ENCODE measurements at regions of chr6 and their contacts with region 1.

Region 1: GRCh38 chr6:26520853-26521599 is 17.1 kb upstream of the HMGN4 start:
- DNase-seq: peak; percentile 80
- ATAC-seq: peak; percentile 78
- H3K4me3 ChIP-seq: peak overlapping the region; percentile 60
- H3K27ac ChIP-seq: peak overlapping the region; percentile 91
- H3K4me1 ChIP-seq: peaks cover 5% of the 10 kb centered on the region; the same call in 1 of the 2 replicates
- H3K27me3 ChIP-seq: no peaks in the 10 kb centered on the region
- CTCF ChIP-seq: no peak
- POLR2A ChIP-seq: peak; percentile 73
- RAD21 ChIP-seq: no peak

Region 2: DNA sequence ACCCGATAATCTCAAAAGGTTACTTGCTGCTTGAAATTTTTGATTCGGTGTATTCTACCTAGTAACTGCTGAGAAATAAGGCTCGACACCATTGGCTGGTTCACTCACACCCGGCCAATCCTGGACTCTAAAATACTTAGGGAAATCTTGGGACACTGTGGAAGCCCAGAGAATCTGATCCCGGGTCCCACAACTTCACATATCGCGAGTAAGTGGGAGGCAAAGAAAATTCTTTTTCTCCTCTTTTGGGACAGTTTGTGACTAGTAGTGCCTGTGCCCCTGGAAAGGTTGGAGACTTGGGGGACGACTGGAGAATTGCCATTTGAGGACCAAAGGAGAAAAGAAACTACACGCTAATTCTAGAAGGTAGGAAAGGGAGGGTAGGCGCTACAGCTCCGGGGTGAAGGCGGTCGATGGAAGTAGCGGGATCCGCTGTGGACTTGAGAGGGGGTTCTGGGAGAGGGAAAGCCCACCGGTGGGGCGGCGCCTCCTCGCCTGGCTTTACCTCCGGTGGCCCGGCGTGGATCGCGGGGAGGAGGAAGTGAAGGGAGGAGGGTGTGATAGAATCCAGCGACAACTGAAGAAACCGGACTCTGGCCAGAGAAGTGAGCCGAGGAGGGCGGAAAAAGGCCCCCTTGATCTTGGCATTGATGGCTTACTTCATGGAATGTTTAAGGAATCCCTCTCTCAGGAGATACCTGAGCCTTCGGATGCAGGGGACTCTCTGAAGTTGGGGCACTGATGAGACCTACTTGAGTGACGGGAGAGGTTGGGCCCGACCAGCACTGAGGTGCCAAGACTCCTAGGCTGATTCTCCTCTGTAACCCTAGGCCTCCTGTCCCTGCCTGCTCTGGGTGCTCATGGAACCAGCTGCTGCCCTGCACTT is 99.5 kb before region 1 on chr6:
- CTCF ChIA-PET with region 1: no interaction called
- POLR2A ChIA-PET with region 1: no interaction called
- dilution Hi-C with region 1: no loop called
- in situ Hi-C with region 1: no loop called
- intact Hi-C with region 1: loop called (anchors 5 kb)
- DNase-seq: peak; percentile 92
- ATAC-seq: peak; percentile 99
- H3K4me3 ChIP-seq: peak overlapping the region; percentile 81
- H3K27ac ChIP-seq: peak overlapping the region; percentile 95
- H3K4me1 ChIP-seq: peaks cover 5% of the 10 kb centered on the region
- H3K27me3 ChIP-seq: no peaks in the 10 kb centered on the region
- CTCF ChIP-seq: no peak
- POLR2A ChIP-seq: no peak
- RAD21 ChIP-seq: no peak

Region 3: DNA sequence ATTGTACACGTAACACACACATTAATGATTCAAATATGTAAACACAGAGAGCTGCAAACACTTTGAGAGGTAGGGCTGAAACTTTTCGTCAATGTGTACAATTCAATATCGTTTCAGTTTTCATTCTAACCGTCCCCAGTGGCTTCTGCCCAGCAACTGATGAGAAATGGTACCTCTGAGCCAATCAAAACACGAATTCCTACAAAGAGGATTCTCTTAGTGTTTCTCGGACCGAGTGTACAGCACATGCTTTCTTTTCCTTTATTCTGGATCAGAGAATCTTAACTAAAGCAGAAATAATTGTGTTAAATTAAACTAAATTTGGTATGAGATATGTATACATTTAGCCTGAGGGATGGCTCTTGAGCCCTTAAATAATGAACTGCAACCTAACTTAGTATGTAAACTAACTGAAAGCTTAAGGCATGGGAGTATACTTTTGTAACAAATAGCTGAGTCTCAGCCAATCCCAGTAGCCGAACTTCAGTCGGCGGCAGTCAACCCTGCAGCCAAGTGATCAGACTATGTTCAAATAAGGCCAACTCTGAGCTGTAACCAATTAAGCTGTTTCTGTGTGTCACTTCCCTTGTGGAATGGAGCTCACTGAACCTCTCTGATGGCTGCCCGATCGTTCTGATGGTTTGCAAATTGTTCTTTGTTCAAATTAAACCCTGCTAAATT is 47.1 kb before region 1 on chr6:
- CTCF ChIA-PET with region 1: no interaction called
- POLR2A ChIA-PET with region 1: no interaction called
- dilution Hi-C with region 1: no loop called
- in situ Hi-C with region 1: no loop called
- intact Hi-C with region 1: loop called (anchors 5 kb)
- DNase-seq: peak; percentile 97
- ATAC-seq: peak; percentile 90
- H3K4me3 ChIP-seq: peak overlapping the region; percentile 53
- H3K27ac ChIP-seq: peak overlapping the region; percentile 98
- H3K4me1 ChIP-seq: peaks cover 24% of the 10 kb centered on the region
- H3K27me3 ChIP-seq: no peaks in the 10 kb centered on the region
- CTCF ChIP-seq: no peak
- POLR2A ChIP-seq: peak; percentile 79
- RAD21 ChIP-seq: no peak

Region 4: GRCh38 chr6:26553635-26554446 is 32.8 kb after region 1 on chr6:
- CTCF ChIA-PET with region 1: no interaction called
- POLR2A ChIA-PET with region 1: no interaction called
- dilution Hi-C with region 1: no loop called
- in situ Hi-C with region 1: no loop called
- intact Hi-C with region 1: loop called (anchors 5 kb)
- DNase-seq: peak; percentile 92
- ATAC-seq: peak; percentile 50
- H3K4me3 ChIP-seq: peak overlapping the region; percentile 58
- H3K27ac ChIP-seq: no peak overlapping the region
- H3K4me1 ChIP-seq: no peaks in the 10 kb centered on the region
- H3K27me3 ChIP-seq: no peaks in the 10 kb centered on the region
- CTCF ChIP-seq: no peak
- POLR2A ChIP-seq: no peak
- RAD21 ChIP-seq: no peak

Measured in IMR-90 (cell line).